CD14-positive monocyte (primary cell): ENCODE measurements at regions of chr4 and their contacts with region 1.

Region 1: DNA sequence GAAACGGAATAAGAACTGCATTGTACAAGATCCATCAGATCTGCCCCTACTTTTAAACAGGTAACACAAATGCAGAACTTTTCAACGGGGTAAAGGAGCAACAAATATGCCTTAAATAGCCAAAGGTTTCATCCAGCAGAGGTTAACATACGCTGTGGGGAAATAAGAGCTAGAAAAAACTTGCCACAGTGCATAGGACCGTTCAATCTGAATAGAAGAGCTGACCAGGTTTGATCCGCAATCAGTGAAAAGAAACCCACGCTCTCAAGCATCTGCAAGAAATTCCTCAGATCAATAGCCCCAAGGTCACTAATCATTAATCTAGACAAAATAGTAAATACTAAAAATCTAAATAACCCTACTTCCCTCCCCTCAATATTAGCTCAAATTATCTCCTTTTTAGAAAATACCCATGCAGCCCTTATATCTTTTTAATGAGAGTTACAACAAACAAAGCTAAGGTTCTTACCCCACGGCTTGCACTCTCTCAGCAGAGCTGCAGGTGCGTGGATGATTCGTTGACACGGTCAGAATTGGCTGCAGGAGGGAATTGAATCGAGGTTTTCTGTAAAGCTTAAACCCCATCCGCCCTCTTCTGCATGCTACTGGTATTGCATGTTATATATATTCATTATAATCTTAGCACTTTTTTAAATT is at the start of gene TLR10:
- DNase-seq: peak; percentile 54 to 64 (median 60)
- H3K4me3 ChIP-seq: peak within 1 kb of the TSS in 1 of 3 experiments; percentile 48
- H3K4me3 Mint-ChIP-seq: peak within 1 kb of the TSS in 1 of 2 donors; percentile 80
- H3K27ac ChIP-seq: peak within 1 kb of the TSS in 1 of 2 donors; percentile 37
- H3K27ac Mint-ChIP-seq: peak within 1 kb of the TSS; percentile 37 to 78 (median 63)
- H3K4me1 ChIP-seq: peaks cover 57 to 58% of the 10 kb centered on the region in 2 donors
- H3K4me1 Mint-ChIP-seq: peaks cover 45% of the 10 kb centered on the region
- H3K27me3 ChIP-seq: no peaks in the 10 kb centered on the region
- H3K27me3 Mint-ChIP-seq: peaks cover 0 to 1% (median 0%) of the 10 kb centered on the region in 3 donors
- CTCF ChIP-seq: peak; percentile 90
- polyA plus RNA-seq, gene TLR10: 1.1 to 1.2 (median 1.1) TPM

Region 2: DNA sequence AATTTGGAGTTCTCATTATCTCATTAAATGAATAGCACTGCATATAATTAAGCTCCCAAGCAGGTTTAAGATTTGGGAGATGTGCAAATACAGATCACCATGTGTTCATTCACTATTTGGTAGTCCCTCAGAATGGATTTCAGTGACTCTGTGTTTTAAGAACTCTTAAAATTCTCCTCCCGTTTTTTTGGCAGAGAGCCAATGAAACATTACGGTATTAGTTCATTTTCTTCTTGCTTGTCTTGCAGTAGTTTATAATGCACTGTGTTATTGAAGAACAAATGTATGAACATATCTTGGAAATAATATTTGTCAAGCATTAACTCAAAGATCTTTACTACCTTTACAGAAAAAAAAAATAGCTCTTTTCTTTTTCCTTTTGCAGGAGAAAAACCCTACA is 85.9 kb before region 1 on chr4:
- intact Hi-C with region 1: no loop called
- DNase-seq: no peak
- H3K4me3 ChIP-seq: no peak overlapping the region
- H3K4me3 Mint-ChIP-seq: no peak overlapping the region
- H3K27ac ChIP-seq: no peak overlapping the region
- H3K27ac Mint-ChIP-seq: no peak overlapping the region
- H3K4me1 ChIP-seq: peaks cover 11 to 12% of the 10 kb centered on the region in 2 donors
- H3K4me1 Mint-ChIP-seq: peaks cover 14% of the 10 kb centered on the region
- H3K27me3 ChIP-seq: no peaks in the 10 kb centered on the region
- H3K27me3 Mint-ChIP-seq: peaks cover 0 to 4% (median under 1%) of the 10 kb centered on the region in 3 donors
- CTCF ChIP-seq: no peak

Region 3: GRCh38 chr4:38752941-38753806 is 29.4 kb before region 1 on chr4:
- intact Hi-C with region 1: loop called in 1 of 2 experiments (anchors 5 kb)
- DNase-seq: no peak
- H3K4me3 ChIP-seq: peak overlapping the region in 1 of 3 experiments; percentile 34
- H3K4me3 Mint-ChIP-seq: no peak overlapping the region
- H3K27ac ChIP-seq: peak overlapping the region; percentile 0 to 72
- H3K27ac Mint-ChIP-seq: peak overlapping the region in 1 of 7 donors; percentile 72
- H3K4me1 ChIP-seq: peaks cover 36 to 43% of the 10 kb centered on the region in 2 donors
- H3K4me1 Mint-ChIP-seq: peaks cover 13% of the 10 kb centered on the region
- H3K27me3 ChIP-seq: no peaks in the 10 kb centered on the region
- H3K27me3 Mint-ChIP-seq: no peaks in the 10 kb centered on the region
- CTCF ChIP-seq: no peak